Aorta (tissue), 5 donors: ENCODE measurements at regions of chr2 and their contacts with region 1.

Region 1: DNA sequence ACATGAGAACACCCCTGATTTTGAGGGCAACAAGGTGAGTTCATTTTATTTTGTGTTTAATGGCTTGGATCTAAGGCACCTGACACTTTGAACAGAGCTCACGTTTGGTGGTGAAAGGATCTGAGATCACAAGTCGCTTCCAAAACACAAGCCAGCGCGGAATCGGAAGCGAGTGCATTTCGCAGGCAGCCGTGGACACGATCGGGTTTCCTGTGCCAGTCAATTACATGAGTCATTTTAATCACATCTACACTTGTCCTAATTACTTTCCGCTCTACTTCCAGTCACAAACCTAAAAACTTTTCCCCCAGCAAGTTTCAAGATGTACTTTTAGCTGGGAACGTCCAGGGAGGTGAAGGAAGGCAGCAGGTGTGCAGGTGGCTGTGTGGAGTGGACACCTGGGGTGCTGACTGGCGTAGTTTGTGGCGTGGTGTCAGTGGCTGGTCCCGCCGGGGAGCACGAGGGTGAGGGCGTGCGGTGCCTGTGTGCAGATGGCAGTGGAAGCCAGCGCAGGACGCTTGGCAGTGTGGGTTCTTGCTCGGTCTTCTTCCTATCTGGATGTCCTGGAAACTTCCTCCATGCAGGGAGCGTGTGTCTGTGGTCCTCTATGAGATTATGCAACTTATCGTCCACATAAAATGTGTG is 75.6 kb downstream of the DCDC2C start:
- DNase-seq: no peak
- ATAC-seq: no peak
- H3K4me3 ChIP-seq: no peak overlapping the region
- H3K27ac ChIP-seq: no peak overlapping the region
- H3K4me1 ChIP-seq: no peaks in the 10 kb centered on the region
- H3K27me3 ChIP-seq: no peaks in the 10 kb centered on the region

Region 2: GRCh38 chr2:3728104-3729054 is 50.6 kb before region 1 on chr2:
- intact Hi-C with region 1: loop called in 1 of 2 experiments (anchors 5 kb)
- DNase-seq: peak in 1 of 2 donors; percentile 54
- ATAC-seq: peak; percentile 49
- H3K4me3 ChIP-seq: no peak overlapping the region
- H3K27ac ChIP-seq: no peak overlapping the region
- H3K4me1 ChIP-seq: no peaks in the 10 kb centered on the region
- H3K27me3 ChIP-seq: no peaks in the 10 kb centered on the region

Region 3: GRCh38 chr2:3913166-3913565 is 134.2 kb after region 1 on chr2:
- intact Hi-C with region 1: no loop called
- DNase-seq: no peak
- ATAC-seq: no peak
- H3K4me3 ChIP-seq: no peak overlapping the region
- H3K27ac ChIP-seq: no peak overlapping the region
- H3K4me1 ChIP-seq: no peaks in the 10 kb centered on the region
- H3K27me3 ChIP-seq: no peaks in the 10 kb centered on the region